HepG2 (cell line): ENCODE measurements at regions of chr1 and their contacts with region 1.

Region 1: DNA sequence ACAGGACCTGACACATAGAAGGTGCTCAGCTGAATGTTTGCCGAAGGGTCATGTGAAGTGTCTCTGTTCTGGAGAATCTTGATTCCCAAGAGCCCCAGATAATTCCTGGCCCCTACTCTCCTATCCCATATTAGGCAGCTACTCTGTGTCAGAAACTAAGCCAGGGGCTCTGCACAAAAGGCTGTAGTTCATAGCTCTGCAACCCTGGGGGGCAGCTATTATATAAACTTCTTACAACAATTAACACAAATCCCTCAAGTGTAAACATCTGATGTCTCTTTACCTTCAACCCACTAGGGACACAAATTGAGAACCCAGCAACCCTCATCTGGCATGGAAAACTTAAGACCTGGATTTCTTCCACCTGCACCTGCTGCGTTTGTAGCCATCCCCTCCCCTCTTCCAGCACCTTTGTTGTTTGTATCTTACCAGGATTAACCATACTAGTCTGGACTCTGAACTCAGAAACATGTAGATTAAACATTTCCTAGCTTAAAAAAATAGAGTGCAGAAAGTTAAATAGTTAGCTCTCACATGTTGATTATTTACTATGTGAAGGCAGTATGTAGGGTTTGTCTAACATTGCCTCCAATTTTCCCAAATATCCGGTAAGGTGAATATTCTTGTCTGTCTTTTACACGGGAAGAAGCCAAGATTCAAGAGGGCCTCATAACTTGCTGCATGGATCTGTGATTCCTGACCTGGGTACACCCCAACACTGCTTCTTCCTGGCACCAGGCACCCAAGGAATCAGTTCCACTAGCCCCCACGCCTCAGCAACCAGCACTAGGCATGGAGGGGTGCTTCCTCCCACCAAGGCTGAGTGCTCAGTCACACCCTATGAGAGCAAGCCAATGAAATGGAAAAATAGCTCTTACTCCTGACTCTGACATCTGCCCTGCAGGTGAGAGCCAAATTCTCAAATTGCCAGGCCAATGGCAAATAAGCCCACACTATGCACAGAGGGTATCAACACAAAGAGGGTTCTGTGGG is 220.7 kb upstream of the HOOK1 start:
- DNase-seq: peak; percentile 65
- ATAC-seq: peak; percentile 86
- H3K4me3 ChIP-seq: peak overlapping the region in 2 of 3 experiments; percentile 3 to 35; a peak in 2 of 6 replicates
- H3K27ac ChIP-seq: peak overlapping the region; percentile 70
- H3K4me1 ChIP-seq: peaks cover 40% of the 10 kb centered on the region
- H3K27me3 ChIP-seq: no peaks in the 10 kb centered on the region
- CTCF ChIP-seq: no peak
- EP300 ChIP-seq: peak in 1 of 2 experiments; percentile 57; a peak in 2 of 4 replicates
- POLR2A ChIP-seq: no peak
- RAD21 ChIP-seq: no peak

Region 2: GRCh38 chr1:59543211-59543668 is 50.9 kb before region 1 on chr1:
- CTCF ChIA-PET with region 1: no interaction called
- POLR2A ChIA-PET with region 1: interaction called, 11 read pairs
- in situ Hi-C with region 1: no loop called
- intact Hi-C with region 1: no loop called
- DNase-seq: peak; percentile 59
- ATAC-seq: peak; percentile 93
- H3K4me3 ChIP-seq: peak overlapping the region in 2 of 3 experiments; percentile 4 to 6; a peak in 1 of 6 replicates
- H3K27ac ChIP-seq: peak overlapping the region; percentile 60
- H3K4me1 ChIP-seq: peaks cover 34% of the 10 kb centered on the region
- H3K27me3 ChIP-seq: no peaks in the 10 kb centered on the region
- CTCF ChIP-seq: no peak
- EP300 ChIP-seq: peak in 1 of 2 experiments; percentile 41; a peak in 1 of 4 replicates
- POLR2A ChIP-seq: no peak
- RAD21 ChIP-seq: no peak

Region 3: GRCh38 chr1:59638231-59638711 is 44.2 kb after region 1 on chr1:
- CTCF ChIA-PET with region 1: no interaction called
- POLR2A ChIA-PET with region 1: no interaction called
- in situ Hi-C with region 1: no loop called
- intact Hi-C with region 1: no loop called
- DNase-seq: peak; percentile 81
- ATAC-seq: peak; percentile 81
- H3K4me3 ChIP-seq: no peak overlapping the region
- H3K27ac ChIP-seq: peak overlapping the region; percentile 52
- H3K4me1 ChIP-seq: peaks cover 51% of the 10 kb centered on the region
- H3K27me3 ChIP-seq: no peaks in the 10 kb centered on the region
- CTCF ChIP-seq: no peak
- EP300 ChIP-seq: no peak
- POLR2A ChIP-seq: no peak
- RAD21 ChIP-seq: no peak